A549 (cell line): ENCODE measurements at regions of chr1 and their contacts with region 1.

Region 1: DNA sequence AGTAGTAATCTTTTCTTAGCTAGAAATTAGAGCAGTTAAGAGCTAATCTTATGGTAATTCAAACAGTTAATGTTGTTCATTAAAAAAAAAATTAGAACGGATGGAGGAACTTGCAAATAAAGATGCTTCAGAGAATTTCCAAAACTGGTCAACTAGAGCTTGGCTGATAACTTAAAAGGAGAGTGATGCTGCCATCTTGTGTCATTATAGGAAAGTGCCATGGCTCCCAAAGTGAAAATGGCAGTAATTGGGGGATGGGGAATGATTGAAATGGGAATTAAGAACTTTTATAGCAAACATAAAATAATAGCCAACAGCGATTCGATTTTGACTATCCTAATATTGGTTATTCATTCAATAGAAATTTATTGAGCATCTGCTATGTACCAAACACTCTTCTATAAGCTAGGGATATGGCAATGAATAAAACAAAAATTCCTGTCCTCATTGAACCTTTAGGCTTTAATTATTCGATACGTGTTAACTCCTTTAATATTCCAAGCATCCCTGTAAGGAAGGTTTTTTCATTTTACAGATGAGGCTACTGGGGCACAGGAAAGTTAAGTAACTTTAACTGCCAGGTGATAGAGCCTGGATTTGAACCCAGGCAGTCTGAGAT is 5.7 kb upstream of the PLPP3 start:
- DNase-seq: peak; percentile 28 to 60
- ATAC-seq: peak; percentile 59 to 71; a peak in 4 of 6 replicates
- H3K4me3 ChIP-seq: no peak overlapping the region
- H3K27ac ChIP-seq: peak overlapping the region; percentile 49 to 55; a peak in 5 of 6 replicates
- H3K4me1 ChIP-seq: peaks cover 10% of the 10 kb centered on the region
- CTCF ChIP-seq: peak; percentile 75
- EP300 ChIP-seq: no peak
- POLR2A ChIP-seq: no peak
- RAD21 ChIP-seq: peak; percentile 84 to 87

Region 2: GRCh38 chr1:55284852-55285251 is 1300.2 kb before region 1 on chr1:
- CTCF ChIA-PET with region 1: interaction called, 54 read pairs
- POLR2A ChIA-PET with region 1: interaction called, 4 read pairs
- DNase-seq: peak; percentile 15 to 64
- ATAC-seq: peak; percentile 83 to 89; a peak in 5 of 6 replicates
- H3K4me3 ChIP-seq: no peak overlapping the region
- H3K27ac ChIP-seq: peak overlapping the region; percentile 84 to 90
- H3K4me1 ChIP-seq: peaks cover 11% of the 10 kb centered on the region
- CTCF ChIP-seq: peak; percentile 70
- EP300 ChIP-seq: no peak
- POLR2A ChIP-seq: no peak
- RAD21 ChIP-seq: peak; percentile 80 to 90

Region 3: DNA sequence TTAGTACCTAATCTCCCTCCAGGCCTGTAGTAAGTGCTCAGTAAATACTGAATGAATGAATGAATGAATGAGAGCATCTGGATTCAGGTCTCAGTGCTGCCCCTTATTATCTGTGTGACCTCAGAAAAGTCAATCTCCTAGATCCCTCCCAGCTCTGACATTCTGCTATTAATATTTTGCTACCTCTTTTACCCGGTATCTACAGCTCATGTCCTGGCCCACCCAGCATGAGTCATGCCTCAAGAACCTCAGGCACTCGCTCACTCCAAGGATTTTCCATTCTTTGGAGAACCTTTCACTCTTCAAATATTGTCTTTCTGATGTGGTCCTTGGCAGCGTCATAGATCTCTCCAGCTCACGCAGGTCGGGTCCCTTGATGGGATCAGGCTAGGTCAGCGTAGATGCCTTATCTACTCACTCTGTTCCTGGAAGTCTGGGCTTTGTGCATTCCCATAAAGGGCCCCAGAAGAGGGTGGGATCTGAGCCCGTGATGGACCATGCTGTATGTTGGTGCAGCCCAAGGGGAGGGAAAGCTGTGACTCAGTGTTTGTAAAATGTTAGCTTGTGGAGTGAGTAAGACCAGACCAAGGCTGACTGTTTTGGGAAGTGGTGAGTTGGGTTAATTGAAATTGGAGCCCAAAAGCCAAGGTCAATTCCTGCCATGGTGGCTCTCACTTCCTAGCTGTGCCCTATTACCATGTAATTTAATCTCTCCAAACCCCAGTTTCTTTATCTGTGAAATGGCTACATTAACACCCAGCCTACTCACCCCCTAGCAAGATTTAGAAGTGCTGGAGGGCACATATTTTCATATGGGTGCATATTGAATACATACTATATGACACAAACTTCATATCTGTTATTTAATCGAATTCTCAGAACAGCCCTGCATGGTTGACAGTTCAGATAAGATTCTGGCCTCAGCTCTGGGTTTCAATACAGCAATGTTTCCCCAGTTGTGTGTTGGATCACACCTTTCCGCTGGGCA is 1155.8 kb before region 1 on chr1:
- CTCF ChIA-PET with region 1: interaction called, 12 read pairs
- POLR2A ChIA-PET with region 1: no interaction called
- DNase-seq: peak; percentile 95 to 100
- ATAC-seq: peak; percentile 99
- H3K4me3 ChIP-seq: no peak overlapping the region
- H3K27ac ChIP-seq: peak overlapping the region; percentile 97 to 99
- H3K4me1 ChIP-seq: peaks cover 36% of the 10 kb centered on the region
- CTCF ChIP-seq: no peak
- EP300 ChIP-seq: peak; percentile 99 to 100
- POLR2A ChIP-seq: no peak
- RAD21 ChIP-seq: peak; percentile 40 to 80

Region 4: GRCh38 chr1:56535939-56536338 is 49.1 kb before region 1 on chr1:
- CTCF ChIA-PET with region 1: no interaction called
- POLR2A ChIA-PET with region 1: no interaction called
- DNase-seq: no peak
- ATAC-seq: no peak
- H3K4me3 ChIP-seq: no peak overlapping the region
- H3K27ac ChIP-seq: no peak overlapping the region
- H3K4me1 ChIP-seq: no peaks in the 10 kb centered on the region
- CTCF ChIP-seq: no peak
- EP300 ChIP-seq: no peak
- POLR2A ChIP-seq: no peak
- RAD21 ChIP-seq: no peak

Region 5: DNA sequence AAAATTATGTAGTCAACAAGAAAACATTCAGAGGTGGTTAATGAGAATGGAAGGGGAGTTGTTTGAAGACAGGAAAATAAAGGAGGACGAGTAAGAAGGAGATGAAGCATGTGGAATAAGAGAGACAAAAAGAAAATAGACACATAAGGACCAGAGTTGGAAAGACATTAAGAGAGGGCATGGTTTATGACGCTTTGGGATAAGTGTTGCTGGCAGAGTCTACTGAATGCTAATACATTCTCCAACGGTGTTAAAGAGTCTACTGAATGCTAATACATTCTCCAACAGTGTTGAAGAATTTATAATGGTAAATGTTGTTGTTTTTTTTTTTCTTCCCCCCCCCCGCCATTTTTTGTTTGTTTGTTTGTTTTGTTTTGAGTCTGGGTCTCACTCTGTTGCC is 73.2 kb after region 1 on chr1:
- CTCF ChIA-PET with region 1: no interaction called
- POLR2A ChIA-PET with region 1: no interaction called
- DNase-seq: no peak
- ATAC-seq: no peak
- H3K4me3 ChIP-seq: no peak overlapping the region
- H3K27ac ChIP-seq: no peak overlapping the region
- H3K4me1 ChIP-seq: no peaks in the 10 kb centered on the region
- CTCF ChIP-seq: no peak
- EP300 ChIP-seq: no peak
- POLR2A ChIP-seq: no peak
- RAD21 ChIP-seq: no peak

Region 6: GRCh38 chr1:56709269-56709880 is 124.4 kb after region 1 on chr1:
- CTCF ChIA-PET with region 1: interaction called, 12 read pairs
- POLR2A ChIA-PET with region 1: no interaction called
- DNase-seq: peak; percentile 19 to 63
- ATAC-seq: peak; percentile 62 to 77; a peak in 4 of 6 replicates
- H3K4me3 ChIP-seq: no peak overlapping the region
- H3K27ac ChIP-seq: no peak overlapping the region
- H3K4me1 ChIP-seq: peaks cover 28% of the 10 kb centered on the region
- CTCF ChIP-seq: peak; percentile 66
- EP300 ChIP-seq: no peak
- POLR2A ChIP-seq: no peak
- RAD21 ChIP-seq: peak; percentile 69 to 78